Ascending aorta (tissue), 2 donors: ENCODE measurements at regions of chr5 and their contacts with region 1.

Region 1: DNA sequence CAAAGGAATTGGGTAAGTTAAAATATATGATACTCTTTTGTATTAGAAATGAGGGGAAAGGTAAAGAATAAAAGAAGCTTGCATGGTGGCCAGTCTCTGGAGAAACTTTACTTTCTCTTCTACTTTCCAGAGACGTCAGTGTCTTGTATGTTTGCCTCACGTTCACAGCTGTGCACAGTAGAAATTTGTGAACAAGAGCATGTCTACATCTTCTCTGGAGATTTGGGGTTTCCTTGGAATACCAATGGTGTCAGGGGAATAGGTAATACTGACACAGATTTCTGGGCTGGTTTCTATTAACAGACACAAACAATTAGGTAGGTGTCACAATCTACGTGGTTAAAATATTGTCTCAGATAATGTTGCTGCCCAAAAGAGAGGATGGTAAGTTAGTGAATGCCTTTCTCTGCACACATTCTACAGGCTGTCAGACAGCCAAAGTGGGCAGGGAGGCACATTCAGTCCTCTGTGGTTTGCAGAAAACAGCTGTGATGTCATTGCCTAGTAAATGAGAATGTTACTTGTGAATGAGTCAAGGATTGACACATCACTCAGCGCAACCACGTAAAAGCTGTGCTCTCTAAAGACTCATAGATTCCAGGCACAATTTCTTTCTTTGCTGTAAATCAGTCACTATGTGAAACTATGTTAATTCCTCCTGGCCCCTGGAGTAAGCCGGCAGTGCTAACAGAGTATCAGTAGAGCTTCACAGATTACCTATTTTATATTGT is 397.1 kb downstream of the MAN2A1 start:
- DNase-seq: peak; percentile 42 to 91
- H3K4me3 ChIP-seq: no peak overlapping the region
- H3K27ac ChIP-seq: peak overlapping the region; percentile 52 to 66
- H3K4me1 ChIP-seq: peaks cover 0 to 25% of the 10 kb centered on the region in 2 donors
- H3K27me3 ChIP-seq: no peaks in the 10 kb centered on the region
- CTCF ChIP-seq: no peak

Region 2: GRCh38 chr5:109900911-109901627 is 185.8 kb before region 1 on chr5:
- intact Hi-C with region 1: loop called (anchors 5 kb)
- DNase-seq: no peak
- H3K4me3 ChIP-seq: no peak overlapping the region
- H3K27ac ChIP-seq: no peak overlapping the region
- H3K4me1 ChIP-seq: peaks cover 0 to 4% of the 10 kb centered on the region in 2 donors
- H3K27me3 ChIP-seq: no peaks in the 10 kb centered on the region
- CTCF ChIP-seq: no peak

Region 3: GRCh38 chr5:109987970-109988369 is 98.9 kb before region 1 on chr5:
- intact Hi-C with region 1: loop called (anchors 5 kb)
- DNase-seq: no peak
- H3K4me3 ChIP-seq: peak overlapping the region in 1 of 2 donors; percentile 7
- H3K27ac ChIP-seq: peak overlapping the region; percentile 90 to 97
- H3K4me1 ChIP-seq: peaks cover 0 to 28% of the 10 kb centered on the region in 2 donors
- H3K27me3 ChIP-seq: no peaks in the 10 kb centered on the region
- CTCF ChIP-seq: no peak

Region 4: GRCh38 chr5:110001648-110002047 is 85.2 kb before region 1 on chr5:
- intact Hi-C with region 1: loop called (anchors 5 kb)
- DNase-seq: no peak
- H3K4me3 ChIP-seq: no peak overlapping the region
- H3K27ac ChIP-seq: peak overlapping the region; percentile 65 to 72
- H3K4me1 ChIP-seq: peaks cover 7 to 37% of the 10 kb centered on the region in 2 donors
- H3K27me3 ChIP-seq: no peaks in the 10 kb centered on the region
- CTCF ChIP-seq: no peak

Region 5: DNA sequence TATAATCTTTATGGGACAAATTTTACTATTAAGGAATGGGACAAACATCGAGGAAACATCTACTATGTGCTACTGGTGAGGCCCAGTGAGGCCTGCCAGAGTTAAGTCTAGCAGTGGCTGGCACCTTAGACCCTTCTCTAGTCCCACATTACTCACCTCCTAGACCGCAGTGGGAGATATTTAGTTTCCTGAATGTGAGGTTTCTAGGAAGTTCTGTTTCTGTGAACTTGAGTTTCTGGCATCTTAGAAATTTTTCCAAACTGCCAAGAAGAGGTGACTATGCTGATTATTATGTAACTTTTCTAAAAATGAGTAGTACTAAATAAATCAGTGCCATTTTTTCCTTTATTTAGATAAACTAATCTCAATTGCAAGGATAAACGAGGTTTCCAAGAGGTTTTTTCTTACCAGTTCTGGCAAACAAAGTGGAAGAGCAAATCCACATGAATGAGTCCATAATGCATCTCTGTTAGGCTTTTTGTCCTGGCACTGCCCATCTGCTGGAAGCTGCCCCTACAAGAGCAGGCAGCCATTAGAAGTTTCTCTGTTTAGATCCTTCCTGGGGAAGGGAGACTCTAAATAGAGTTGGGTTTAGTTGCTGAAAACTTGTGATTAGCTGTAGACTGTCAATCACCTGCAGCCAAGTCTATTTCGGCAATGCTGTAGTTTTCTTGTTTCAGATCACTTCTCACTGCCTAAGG is 48.4 kb before region 1 on chr5:
- intact Hi-C with region 1: loop called (anchors 1 kb)
- DNase-seq: peak; percentile 16 to 73
- H3K4me3 ChIP-seq: no peak overlapping the region
- H3K27ac ChIP-seq: peak overlapping the region; percentile 45 to 62
- H3K4me1 ChIP-seq: peaks cover 0 to 5% of the 10 kb centered on the region in 2 donors
- H3K27me3 ChIP-seq: no peaks in the 10 kb centered on the region
- CTCF ChIP-seq: no peak

Region 6: DNA sequence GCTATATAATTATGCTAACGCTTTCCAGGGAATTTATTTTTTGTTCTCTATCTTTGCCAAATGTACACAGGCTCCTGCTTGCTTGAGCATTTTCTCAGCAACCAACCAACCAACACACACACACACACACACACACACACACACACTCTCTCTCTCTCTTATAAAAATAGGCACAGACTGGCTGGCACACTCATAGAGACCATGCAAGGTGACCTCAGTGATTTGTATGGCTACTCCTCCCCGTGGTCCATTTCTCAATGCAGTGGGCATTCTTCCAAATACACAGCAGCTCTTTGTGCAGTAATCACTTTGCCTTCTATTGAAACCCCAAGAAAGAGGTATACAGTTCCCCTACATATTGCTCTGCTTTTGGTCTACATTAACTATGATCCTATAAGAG is 18.9 kb after region 1 on chr5:
- intact Hi-C with region 1: loop called (anchors 2 kb)
- DNase-seq: peak; percentile 25 to 84
- H3K4me3 ChIP-seq: no peak overlapping the region
- H3K27ac ChIP-seq: no peak overlapping the region
- H3K4me1 ChIP-seq: peaks cover 0 to 16% of the 10 kb centered on the region in 2 donors
- H3K27me3 ChIP-seq: no peaks in the 10 kb centered on the region
- CTCF ChIP-seq: no peak

Region 7: DNA sequence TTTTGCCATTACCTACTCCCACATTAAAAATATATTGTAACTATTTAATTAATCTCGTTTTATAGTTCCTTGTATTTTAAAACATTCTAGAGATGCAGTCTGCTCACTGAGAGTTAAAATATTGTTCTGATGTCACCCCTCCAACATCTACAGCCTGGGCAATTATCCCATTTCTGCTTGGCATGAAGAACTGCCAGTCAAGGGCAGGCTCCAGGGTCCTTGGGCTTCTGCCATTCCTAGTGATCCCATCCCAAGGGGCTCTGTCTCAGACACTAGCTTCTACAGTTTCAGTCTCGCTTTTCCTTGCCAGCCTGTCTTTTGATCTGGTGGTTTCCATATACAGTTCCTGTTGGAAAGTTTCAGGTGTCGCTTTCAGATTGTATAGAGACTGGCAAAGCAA is 352.5 kb after region 1 on chr5:
- intact Hi-C with region 1: no loop called
- DNase-seq: no peak
- H3K4me3 ChIP-seq: peak overlapping the region in 1 of 2 donors; percentile 50
- H3K27ac ChIP-seq: peak overlapping the region; percentile 35 to 42
- H3K4me1 ChIP-seq: peaks cover 0 to 3% of the 10 kb centered on the region in 2 donors
- H3K27me3 ChIP-seq: no peaks in the 10 kb centered on the region
- CTCF ChIP-seq: no peak